ENCODE measurements at regions of chr1 and their contacts with region 1.

Region 1: DNA sequence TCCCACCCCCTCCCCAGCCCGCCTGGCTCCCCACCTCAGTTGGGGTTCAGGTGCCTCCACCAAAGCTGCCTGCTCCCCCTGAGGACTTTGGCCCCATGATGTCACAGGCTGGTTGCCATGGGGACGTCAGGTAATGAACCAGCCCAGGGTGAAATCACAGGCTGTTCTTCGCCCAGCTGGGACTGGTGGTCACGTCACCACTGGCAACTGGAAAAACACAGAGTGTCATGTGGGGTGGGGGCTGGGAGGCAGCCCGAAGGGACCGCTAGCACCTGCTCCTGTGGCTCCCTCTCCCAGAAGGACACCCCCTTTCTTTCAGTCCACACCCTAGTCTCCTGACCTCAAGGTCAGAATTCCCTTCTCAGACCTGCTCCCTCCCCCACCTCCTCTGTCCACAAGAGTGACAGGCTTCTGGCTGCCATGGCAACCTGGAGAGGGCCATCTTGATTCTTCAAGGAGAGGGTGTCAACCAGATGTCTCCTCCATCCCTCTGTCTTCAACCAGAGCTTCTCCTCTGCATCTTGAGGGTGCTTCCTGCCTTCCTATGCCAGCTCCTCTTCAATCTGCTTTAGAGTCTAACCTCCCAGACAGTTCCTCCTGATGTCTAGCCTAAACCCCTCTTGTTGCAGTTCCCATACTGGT is 6.2 kb downstream of the FAM131C start:
- DNase-seq: no peak
- H3K4me3 ChIP-seq: no peak overlapping the region
- H3K27ac ChIP-seq: no peak overlapping the region
- H3K4me1 ChIP-seq: no peaks in the 10 kb centered on the region
- H3K27me3 ChIP-seq: no peaks in the 10 kb centered on the region
- CTCF ChIP-seq: no peak

Region 2: GRCh38 chr1:15515022-15515663 is 552.1 kb before region 1 on chr1:
- CTCF ChIA-PET with region 1: no interaction called
- POLR2A ChIA-PET with region 1: no interaction called
- intact Hi-C with region 1: no loop called
- DNase-seq: no peak
- H3K4me3 ChIP-seq: no peak overlapping the region
- H3K27ac ChIP-seq: no peak overlapping the region
- H3K4me1 ChIP-seq: no peaks in the 10 kb centered on the region
- H3K27me3 ChIP-seq: no peaks in the 10 kb centered on the region
- CTCF ChIP-seq: no peak

Region 3: GRCh38 chr1:15825800-15826199 is 241.4 kb before region 1 on chr1:
- CTCF ChIA-PET with region 1: no interaction called
- POLR2A ChIA-PET with region 1: no interaction called
- intact Hi-C with region 1: no loop called
- DNase-seq: no peak
- H3K4me3 ChIP-seq: no peak overlapping the region
- H3K27ac ChIP-seq: no peak overlapping the region
- H3K4me1 ChIP-seq: no peaks in the 10 kb centered on the region
- H3K27me3 ChIP-seq: no peaks in the 10 kb centered on the region
- CTCF ChIP-seq: no peak

Region 4: DNA sequence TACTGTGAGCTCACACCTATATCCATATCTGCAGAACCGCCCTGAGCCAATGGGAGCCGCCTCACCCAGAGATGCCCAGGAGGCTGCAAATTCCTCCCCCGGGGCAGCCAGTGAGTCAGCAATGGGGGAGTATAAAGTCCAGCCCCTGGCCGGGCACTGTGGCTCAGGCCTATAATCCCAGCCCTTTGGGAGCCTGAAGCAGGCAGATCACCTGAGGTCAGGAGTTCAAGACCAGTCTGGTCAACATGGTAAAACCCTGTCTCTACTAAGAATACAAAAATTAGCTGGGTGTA is 28.7 kb before region 1 on chr1:
- CTCF ChIA-PET with region 1: interaction called, 3 read pairs
- POLR2A ChIA-PET with region 1: no interaction called
- intact Hi-C with region 1: loop called (anchors 1 kb)
- DNase-seq: no peak
- H3K4me3 ChIP-seq: no peak overlapping the region
- H3K27ac ChIP-seq: no peak overlapping the region
- H3K4me1 ChIP-seq: no peaks in the 10 kb centered on the region
- H3K27me3 ChIP-seq: no peaks in the 10 kb centered on the region
- CTCF ChIP-seq: no peak

Measured in A673 (cell line).